ENCODE measurements at regions of chr1 and their contacts with region 1.

Region 1: GRCh38 chr1:109397538-109398342 is at the start of gene SORT1:
- DNase-seq: peak; percentile 77
- H3K4me3 Mint-ChIP-seq: peak within 1 kb of the TSS; percentile 78
- H3K27ac Mint-ChIP-seq: no peak within 1 kb of the TSS
- H3K4me1 Mint-ChIP-seq: peaks cover 24% of the 10 kb centered on the region
- H3K27me3 Mint-ChIP-seq: no peaks in the 10 kb centered on the region
- CTCF ChIP-seq: no peak
- total RNA-seq, gene SORT1: 13.3 TPM in 2 replicates

Region 2: DNA sequence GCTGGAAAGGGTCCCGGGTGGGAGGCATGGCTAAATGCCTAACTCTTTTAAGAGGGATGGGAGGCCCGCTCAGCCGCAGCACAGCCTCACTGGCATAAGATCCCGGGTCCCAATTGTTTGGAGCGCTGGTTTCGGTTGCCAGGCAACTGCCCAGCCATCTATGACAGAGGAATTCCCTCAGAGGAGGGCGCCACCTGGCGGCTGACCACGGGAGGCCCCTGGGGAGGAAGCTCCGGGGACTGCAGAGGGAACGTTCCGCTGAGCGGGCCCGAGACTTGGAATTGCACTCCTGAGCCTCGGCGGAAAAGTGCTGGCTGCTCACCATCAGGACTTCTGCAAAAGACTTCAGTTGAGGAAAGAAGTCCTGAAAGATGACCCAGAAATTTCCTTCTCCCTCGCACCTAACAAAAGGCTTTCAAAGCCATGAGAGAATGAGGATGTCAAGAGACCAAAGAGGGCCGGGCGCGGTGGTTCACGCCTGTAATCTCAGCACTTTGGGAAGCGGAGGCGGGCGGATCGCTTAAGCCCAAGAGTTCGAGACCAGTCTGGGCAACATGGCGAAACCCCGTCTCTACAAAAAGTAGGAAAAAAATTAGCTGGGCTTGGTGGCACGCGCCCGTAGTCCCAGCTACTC is 285.0 kb before region 1 on chr1:
- CTCF ChIA-PET with region 1: interaction called, 4 read pairs
- POLR2A ChIA-PET with region 1: no interaction called
- intact Hi-C with region 1: loop called (anchors 10 kb)
- DNase-seq: peak; percentile 86
- H3K4me3 Mint-ChIP-seq: peak overlapping the region; percentile 42
- H3K27ac Mint-ChIP-seq: no peak overlapping the region
- H3K4me1 Mint-ChIP-seq: peaks cover 9% of the 10 kb centered on the region
- H3K27me3 Mint-ChIP-seq: peaks cover 29% of the 10 kb centered on the region
- CTCF ChIP-seq: peak; percentile 91

Region 3: DNA sequence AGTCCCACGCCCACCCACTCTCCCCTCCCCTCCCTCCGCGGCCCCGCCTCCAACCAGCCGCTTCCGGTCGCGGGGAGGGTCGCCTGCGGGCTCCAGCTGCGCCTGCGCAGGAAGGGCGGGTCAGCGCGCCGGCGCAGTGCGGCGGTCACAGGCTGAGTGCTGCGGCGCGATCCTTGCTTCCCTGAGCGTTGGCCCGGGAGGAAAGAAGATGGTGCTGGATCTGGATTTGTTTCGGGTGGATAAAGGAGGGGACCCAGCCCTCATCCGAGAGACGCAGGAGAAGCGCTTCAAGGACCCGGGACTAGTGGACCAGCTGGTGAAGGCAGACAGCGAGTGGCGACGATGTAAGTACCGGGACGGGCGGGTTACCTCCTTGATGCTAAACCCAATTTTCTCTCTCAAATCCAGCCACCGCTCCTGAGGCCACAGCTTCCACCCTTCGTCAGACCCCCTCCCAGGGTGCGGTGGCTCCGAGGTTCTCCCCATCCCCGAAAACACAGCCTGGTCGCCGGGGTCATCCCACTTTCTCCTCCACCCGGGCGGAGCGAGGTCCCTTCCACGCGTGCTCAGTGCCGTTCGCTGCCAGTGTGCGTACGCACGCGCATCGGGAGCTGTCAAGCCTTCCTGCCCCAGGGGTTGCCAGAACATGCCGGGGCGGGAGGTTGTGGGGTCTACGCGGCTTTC is 183.8 kb before region 1 on chr1 and contains the start of gene SARS1:
- CTCF ChIA-PET with region 1: interaction called, 7 read pairs
- POLR2A ChIA-PET with region 1: interaction called, 27 read pairs
- intact Hi-C with region 1: no loop called
- DNase-seq: peak; percentile 85
- H3K4me3 Mint-ChIP-seq: peak within 1 kb of the TSS; percentile 98
- H3K27ac Mint-ChIP-seq: peak within 1 kb of the TSS; percentile 98
- H3K4me1 Mint-ChIP-seq: peaks cover 33% of the 10 kb centered on the region
- H3K27me3 Mint-ChIP-seq: no peaks in the 10 kb centered on the region
- CTCF ChIP-seq: no peak
- total RNA-seq, gene SARS1: 381 and 492 TPM in 2 replicates

Region 4: DNA sequence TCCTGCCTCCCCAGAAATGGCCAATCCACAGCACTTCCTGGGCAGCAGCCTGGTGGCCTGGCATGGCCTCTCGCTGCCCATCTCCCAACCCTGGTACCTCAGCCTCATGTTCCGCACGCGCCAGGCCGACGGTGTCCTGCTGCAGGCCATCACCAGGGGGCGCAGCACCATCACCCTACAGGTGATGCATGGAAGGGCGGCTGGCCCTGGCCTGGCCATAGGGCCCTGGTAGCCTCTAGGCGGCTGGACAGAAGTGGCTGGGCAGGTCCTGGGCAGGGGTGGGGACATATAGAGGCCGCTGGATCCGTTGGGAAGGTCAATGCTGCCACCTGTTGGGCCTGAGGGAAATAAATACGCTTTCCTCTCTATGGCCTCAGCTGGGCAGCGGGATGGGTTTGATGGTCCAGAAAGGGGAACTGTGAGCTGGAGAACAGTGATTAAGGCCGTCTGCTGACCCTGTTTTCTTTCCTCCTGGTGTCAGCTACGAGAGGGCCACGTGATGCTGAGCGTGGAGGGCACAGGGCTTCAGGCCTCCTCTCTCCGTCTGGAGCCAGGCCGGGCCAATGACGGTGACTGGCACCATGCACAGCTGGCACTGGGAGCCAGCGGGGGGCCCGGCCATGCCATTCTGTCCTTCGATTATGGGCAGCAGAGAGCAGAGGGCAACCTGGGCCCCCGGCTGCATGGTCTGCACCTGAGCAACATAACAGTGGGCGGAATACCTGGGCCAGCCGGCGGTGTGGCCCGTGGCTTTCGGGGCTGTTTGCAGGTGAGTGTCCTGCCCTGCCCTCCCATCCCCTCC is 133.9 kb before region 1 on chr1:
- CTCF ChIA-PET with region 1: interaction called, 43 read pairs
- POLR2A ChIA-PET with region 1: interaction called, 28 read pairs
- intact Hi-C with region 1: loop called (anchors 1 kb)
- DNase-seq: peak; percentile 94
- H3K4me3 Mint-ChIP-seq: peak overlapping the region; percentile 47
- H3K27ac Mint-ChIP-seq: no peak overlapping the region
- H3K4me1 Mint-ChIP-seq: peaks cover 24% of the 10 kb centered on the region
- H3K27me3 Mint-ChIP-seq: no peaks in the 10 kb centered on the region
- CTCF ChIP-seq: peak; percentile 99

Region 5: GRCh38 chr1:109370712-109371455 is 26.9 kb before region 1 on chr1:
- CTCF ChIA-PET with region 1: interaction called, 5 read pairs
- POLR2A ChIA-PET with region 1: interaction called, 86 read pairs
- intact Hi-C with region 1: no loop called
- DNase-seq: peak; percentile 64
- H3K4me3 Mint-ChIP-seq: peak overlapping the region; percentile 48
- H3K27ac Mint-ChIP-seq: peak overlapping the region; percentile 52
- H3K4me1 Mint-ChIP-seq: peaks cover 34% of the 10 kb centered on the region
- H3K27me3 Mint-ChIP-seq: no peaks in the 10 kb centered on the region
- CTCF ChIP-seq: no peak